Left ventricle myocardium inferior (tissue), 1 donor: ENCODE measurements at regions of chr14 and their contacts with region 1.

Region 1: GRCh38 chr14:37874429-37875191 is 279.2 kb downstream of the TTC6 start:
- DNase-seq: peak; percentile 78
- H3K4me3 ChIP-seq: no peak overlapping the region
- H3K27ac ChIP-seq: no peak overlapping the region
- H3K4me1 ChIP-seq: peaks cover 7% of the 10 kb centered on the region
- H3K27me3 ChIP-seq: peaks cover 15% of the 10 kb centered on the region
- CTCF ChIP-seq: peak; percentile 87

Region 2: GRCh38 chr14:37246427-37246914 is 628.1 kb before region 1 on chr14:
- intact Hi-C with region 1: loop called (anchors 5 kb)
- DNase-seq: no peak
- H3K4me3 ChIP-seq: no peak overlapping the region
- H3K27ac ChIP-seq: no peak overlapping the region
- H3K4me1 ChIP-seq: no peaks in the 10 kb centered on the region
- H3K27me3 ChIP-seq: no peaks in the 10 kb centered on the region
- CTCF ChIP-seq: peak; percentile 84

Region 3: GRCh38 chr14:38278035-38278434 is 403.4 kb after region 1 on chr14:
- intact Hi-C with region 1: no loop called
- DNase-seq: no peak
- H3K4me3 ChIP-seq: no peak overlapping the region
- H3K27ac ChIP-seq: no peak overlapping the region
- H3K4me1 ChIP-seq: no peaks in the 10 kb centered on the region
- H3K27me3 ChIP-seq: no peaks in the 10 kb centered on the region
- CTCF ChIP-seq: no peak